Calu3 (cell line): ENCODE measurements at regions of chr6 and their contacts with region 1.

Region 1: GRCh38 chr6:63307581-63308246 is 12.1 kb downstream of the LGSN start:
- DNase-seq: peak; percentile 54
- H3K4me3 Mint-ChIP-seq: no peak overlapping the region
- H3K27ac Mint-ChIP-seq: no peak overlapping the region
- H3K4me1 Mint-ChIP-seq: no peaks in the 10 kb centered on the region
- H3K27me3 Mint-ChIP-seq: no peaks in the 10 kb centered on the region
- CTCF ChIP-seq: peak; percentile 44

Region 2: GRCh38 chr6:63347599-63347998 is 39.9 kb after region 1 on chr6:
- CTCF ChIA-PET with region 1: interaction called, 4 read pairs
- intact Hi-C with region 1: loop called (anchors 5 kb)
- DNase-seq: no peak
- H3K4me3 Mint-ChIP-seq: peak overlapping the region; percentile 37
- H3K27ac Mint-ChIP-seq: peak overlapping the region; percentile 93
- H3K4me1 Mint-ChIP-seq: peaks cover 58% of the 10 kb centered on the region
- H3K27me3 Mint-ChIP-seq: no peaks in the 10 kb centered on the region
- CTCF ChIP-seq: no peak

Region 3: GRCh38 chr6:63802606-63803206 is 495.0 kb after region 1 on chr6:
- CTCF ChIA-PET with region 1: interaction called, 4 read pairs
- intact Hi-C with region 1: loop called (anchors 2 kb)
- DNase-seq: peak; percentile 6
- H3K4me3 Mint-ChIP-seq: no peak overlapping the region
- H3K27ac Mint-ChIP-seq: no peak overlapping the region
- H3K4me1 Mint-ChIP-seq: peaks cover 54% of the 10 kb centered on the region
- H3K27me3 Mint-ChIP-seq: no peaks in the 10 kb centered on the region
- CTCF ChIP-seq: no peak